ENCODE measurements at regions of chr6 and their contacts with region 1.

Region 1: DNA sequence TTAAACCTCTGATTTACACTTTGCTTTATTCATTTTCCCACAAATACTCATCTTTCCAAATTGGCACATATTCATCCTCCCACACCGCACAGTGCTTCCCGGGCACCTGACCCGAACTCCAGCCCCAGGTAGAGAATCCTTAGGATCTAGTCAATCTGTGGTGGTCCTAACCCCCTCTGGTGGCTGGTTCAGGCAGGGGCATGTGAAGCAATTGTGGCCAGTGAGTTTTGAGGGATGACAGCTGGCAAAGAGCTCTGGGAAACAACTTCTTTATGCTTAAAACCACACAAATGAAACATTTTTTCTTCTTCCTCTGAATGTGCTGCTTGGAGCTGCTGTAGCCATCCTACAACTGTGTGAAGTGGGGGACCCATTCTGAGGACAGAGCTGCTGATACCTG is 54.7 kb downstream of the ELOVL5 start:
- DNase-seq: peak; percentile 31
- ATAC-seq: peak; percentile 69
- H3K4me3 ChIP-seq: no peak overlapping the region
- H3K27ac ChIP-seq: no peak overlapping the region
- H3K4me1 ChIP-seq: peaks cover 14% of the 10 kb centered on the region
- H3K27me3 ChIP-seq: no peaks in the 10 kb centered on the region
- CTCF ChIP-seq: peak; percentile 71
- EP300 ChIP-seq: no peak
- POLR2A ChIP-seq: no peak
- RAD21 ChIP-seq: no peak

Region 2: DNA sequence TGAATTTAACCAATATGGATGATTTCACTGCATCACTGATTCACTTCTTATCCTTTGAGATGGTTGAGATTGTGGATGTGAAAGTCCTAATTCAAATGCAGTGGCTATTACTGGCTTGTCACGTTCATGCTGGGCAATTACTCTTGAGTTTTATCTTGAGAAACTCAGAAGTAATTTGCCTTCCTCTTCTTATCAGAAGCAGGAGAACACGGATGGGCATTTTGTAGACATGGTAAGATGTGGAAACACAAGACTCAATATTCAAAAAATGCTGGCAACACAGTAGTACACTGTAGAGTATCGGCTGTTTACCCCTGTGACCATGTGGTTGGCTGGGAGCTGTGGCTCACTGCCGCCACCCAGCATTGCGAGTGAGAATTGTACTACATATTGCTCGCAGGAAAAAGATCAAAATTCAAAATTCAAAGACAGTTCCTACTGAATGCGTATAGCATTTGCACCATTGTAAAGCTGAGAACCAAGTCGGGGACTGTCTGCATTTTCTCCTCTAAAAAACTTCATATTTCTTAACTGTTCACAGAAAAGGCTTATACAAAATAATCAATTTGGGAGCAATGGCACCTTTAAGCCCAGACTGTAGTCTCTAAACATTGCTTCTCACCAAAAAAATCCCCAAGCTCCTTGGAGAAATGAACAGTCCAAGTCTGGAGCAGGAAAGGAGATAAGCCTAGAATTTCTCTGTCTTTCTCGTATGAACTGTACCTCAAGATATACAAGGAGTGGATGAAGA is 116.6 kb after region 1 on chr6:
- CTCF ChIA-PET with region 1: no interaction called
- POLR2A ChIA-PET with region 1: no interaction called
- in situ Hi-C with region 1: no loop called
- intact Hi-C with region 1: loop called (anchors 2 kb)
- DNase-seq: peak; percentile 56
- ATAC-seq: peak; percentile 100
- H3K4me3 ChIP-seq: no peak overlapping the region
- H3K27ac ChIP-seq: no peak overlapping the region
- H3K4me1 ChIP-seq: peaks cover 4% of the 10 kb centered on the region; the same call in 1 of the 2 replicates
- H3K27me3 ChIP-seq: peaks cover 0 to 4% of the 10 kb centered on the region in 2 experiments; a peak in 1 of 5 replicates
- CTCF ChIP-seq: peak; percentile 96
- EP300 ChIP-seq: no peak
- POLR2A ChIP-seq: no peak
- RAD21 ChIP-seq: peak; percentile 94

Region 3: DNA sequence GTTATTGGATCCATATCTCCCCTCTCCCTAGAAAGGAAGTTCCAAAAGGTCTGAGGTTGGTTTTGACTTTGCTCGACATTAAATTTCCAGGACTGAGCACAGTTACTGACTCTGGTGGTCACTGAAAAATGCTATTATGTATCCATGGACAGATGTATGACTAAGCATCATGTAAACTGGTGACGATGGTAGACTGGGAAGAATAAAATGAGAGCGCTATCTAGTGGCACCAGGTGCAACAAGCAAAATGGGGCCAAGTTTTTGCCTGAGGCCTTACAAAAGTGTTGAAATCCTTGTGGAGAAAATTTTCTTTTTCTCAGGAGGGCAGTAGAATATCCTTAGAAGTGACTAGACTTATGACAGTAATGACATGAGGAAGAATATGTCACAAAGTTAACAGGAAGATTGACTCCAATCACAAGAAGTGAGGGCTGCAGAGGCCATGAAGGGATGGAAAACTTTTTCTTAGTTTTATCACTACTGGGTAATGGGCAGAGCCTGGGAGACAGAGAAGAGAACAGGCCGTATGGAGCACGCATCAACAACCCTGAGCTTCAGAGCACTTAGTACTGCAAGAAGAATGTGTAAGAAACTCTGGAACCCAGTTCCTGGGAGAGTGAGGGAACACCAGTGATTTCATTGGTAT is 143.6 kb after region 1 on chr6:
- CTCF ChIA-PET with region 1: no interaction called
- POLR2A ChIA-PET with region 1: no interaction called
- in situ Hi-C with region 1: no loop called
- intact Hi-C with region 1: loop called (anchors 2 kb)
- DNase-seq: peak; percentile 71
- ATAC-seq: peak; percentile 79
- H3K4me3 ChIP-seq: no peak overlapping the region
- H3K27ac ChIP-seq: no peak overlapping the region
- H3K4me1 ChIP-seq: peaks cover 27% of the 10 kb centered on the region
- H3K27me3 ChIP-seq: 0 out of 5 replicates have a peak, but pooled peaks cover 0 to 5% of the 10 kb centered on the region in 2 experiments
- CTCF ChIP-seq: peak; percentile 88
- EP300 ChIP-seq: no peak
- POLR2A ChIP-seq: no peak
- RAD21 ChIP-seq: peak; percentile 90

Measured in HepG2 (cell line).